ENCODE measurements at regions of chr22 and their contacts with region 1.

Region 1: GRCh38 chr22:19970479-19971275 is 29.1 kb upstream of the TXNRD2 start:
- DNase-seq: peak; percentile 76 to 92
- ATAC-seq: peak; percentile 80
- H3K4me3 ChIP-seq: no peak overlapping the region
- H3K27ac ChIP-seq: no peak overlapping the region
- H3K4me1 ChIP-seq: no peaks in the 10 kb centered on the region
- H3K27me3 ChIP-seq: no peaks in the 10 kb centered on the region

Region 2: GRCh38 chr22:19912271-19912999 is 58.2 kb before region 1 on chr22:
- intact Hi-C with region 1: no loop called
- DNase-seq: peak in 1 of 2 donors; percentile 67
- ATAC-seq: no peak
- H3K4me3 ChIP-seq: no peak overlapping the region
- H3K27ac ChIP-seq: no peak overlapping the region
- H3K4me1 ChIP-seq: no peaks in the 10 kb centered on the region
- H3K27me3 ChIP-seq: no peaks in the 10 kb centered on the region

Region 3: DNA sequence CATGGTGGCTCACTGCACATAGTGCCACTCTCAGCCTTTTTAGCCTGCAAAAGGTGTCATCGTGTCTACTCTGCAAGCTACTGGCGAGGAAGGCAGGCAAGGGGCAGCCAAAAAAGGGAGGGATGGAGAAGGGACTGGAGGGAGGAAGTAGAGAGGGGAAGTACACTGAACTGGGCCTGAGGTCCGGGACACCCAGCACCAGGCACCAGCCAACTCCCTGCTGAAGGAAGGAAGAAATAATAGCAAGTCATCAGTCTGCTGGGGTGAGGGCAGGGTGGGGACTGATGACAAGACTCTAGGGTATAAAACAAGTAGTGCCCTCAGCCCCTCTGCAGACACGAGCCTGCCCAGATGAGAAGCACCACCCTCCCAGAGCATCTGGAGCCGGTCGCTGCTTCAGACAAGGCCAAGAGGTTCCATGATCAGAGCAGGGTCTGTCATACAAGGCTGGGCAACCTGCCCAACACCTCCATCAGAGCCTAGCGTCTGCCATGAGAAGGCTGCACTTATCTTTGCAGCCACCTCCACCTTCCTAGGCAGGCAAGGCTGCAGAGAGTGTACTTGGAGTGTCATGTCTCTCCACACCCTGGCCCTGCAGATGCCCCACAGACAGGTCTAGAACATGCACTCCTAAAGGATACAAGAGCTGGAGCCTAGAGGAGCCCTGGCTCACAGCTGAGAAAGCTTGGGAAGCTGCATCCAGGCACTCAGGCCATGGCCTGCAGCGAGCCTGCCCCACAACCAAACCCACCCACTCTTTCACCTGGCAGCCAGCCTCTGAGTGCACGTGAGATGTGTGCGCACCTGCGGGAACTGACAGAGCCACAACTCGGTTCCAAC is 38.1 kb before region 1 on chr22:
- intact Hi-C with region 1: no loop called
- DNase-seq: peak; percentile 65 to 67
- ATAC-seq: peak; percentile 38
- H3K4me3 ChIP-seq: no peak overlapping the region
- H3K27ac ChIP-seq: no peak overlapping the region
- H3K4me1 ChIP-seq: no peaks in the 10 kb centered on the region
- H3K27me3 ChIP-seq: no peaks in the 10 kb centered on the region

Region 4: DNA sequence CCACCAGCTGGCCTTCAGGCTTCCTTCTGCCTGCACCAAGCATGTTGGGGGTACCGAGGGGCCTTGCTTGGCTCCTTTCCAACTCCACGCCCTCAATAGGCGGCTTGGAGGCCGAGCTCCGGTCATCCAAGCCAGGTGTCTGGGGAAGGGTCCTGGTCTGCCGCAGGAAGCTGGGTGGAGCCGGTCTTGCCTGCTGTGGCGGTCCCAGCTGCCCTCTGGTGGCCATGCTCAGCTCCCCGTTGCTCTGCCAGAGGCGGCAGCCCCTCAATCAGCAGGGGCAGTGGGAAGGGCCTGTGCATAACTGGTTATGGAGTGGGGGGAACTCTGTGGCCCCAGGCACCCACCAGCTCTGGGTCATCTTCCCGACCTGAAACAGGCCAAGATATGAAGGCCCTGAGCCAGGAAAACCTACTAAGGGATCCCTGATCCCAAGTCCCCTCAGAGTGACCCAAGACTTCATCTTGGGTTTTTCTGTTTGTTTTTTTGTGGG is 42.8 kb after region 1 on chr22:
- intact Hi-C with region 1: loop called (anchors 1 kb)
- DNase-seq: peak; percentile 84 to 93
- ATAC-seq: peak; percentile 57
- H3K4me3 ChIP-seq: no peak overlapping the region
- H3K27ac ChIP-seq: no peak overlapping the region
- H3K4me1 ChIP-seq: no peaks in the 10 kb centered on the region
- H3K27me3 ChIP-seq: no peaks in the 10 kb centered on the region

Region 5: GRCh38 chr22:20229916-20230775 is 259.5 kb after region 1 on chr22:
- intact Hi-C with region 1: no loop called
- DNase-seq: peak; percentile 75 to 87
- ATAC-seq: peak; percentile 85
- H3K4me3 ChIP-seq: no peak overlapping the region
- H3K27ac ChIP-seq: no peak overlapping the region
- H3K4me1 ChIP-seq: no peaks in the 10 kb centered on the region
- H3K27me3 ChIP-seq: no peaks in the 10 kb centered on the region

Measured in aorta (tissue), 5 donors.